AG04449 (cell line): ENCODE measurements at regions of chr12 and their contacts with region 1.

Region 1: GRCh38 chr12:26884765-26885576 is 52.0 kb upstream of the ITPR2 start:
- DNase-seq: peak; percentile 4
- H3K4me3 ChIP-seq: no peak overlapping the region
- CTCF ChIP-seq: peak; percentile 94

Region 2: DNA sequence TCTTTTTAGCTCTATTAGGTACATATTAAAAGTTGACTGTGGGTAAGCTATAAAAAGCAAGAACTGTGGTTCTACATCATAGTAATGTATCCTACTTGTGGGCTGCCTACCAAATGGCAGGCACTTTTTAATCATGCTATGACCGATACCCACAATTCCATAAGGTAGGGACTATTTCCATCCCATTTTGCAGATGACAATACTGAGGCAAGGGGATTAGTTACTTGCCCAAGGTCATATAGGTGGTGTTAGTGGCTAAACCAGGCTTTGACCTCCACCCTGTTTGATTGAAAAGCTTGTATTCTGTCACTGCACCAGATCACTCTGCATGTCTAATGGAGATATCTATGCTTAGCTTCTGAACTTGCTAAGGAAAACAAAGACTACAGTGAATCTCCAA is 537.7 kb before region 1 on chr12:
- CTCF ChIA-PET with region 1: no interaction called
- POLR2A ChIA-PET with region 1: no interaction called
- DNase-seq: no peak
- H3K4me3 ChIP-seq: no peak overlapping the region
- CTCF ChIP-seq: no peak

Region 3: GRCh38 chr12:26845057-26845666 is 39.8 kb before region 1 on chr12:
- CTCF ChIA-PET with region 1: interaction called, 54 read pairs
- POLR2A ChIA-PET with region 1: no interaction called
- DNase-seq: no peak
- H3K4me3 ChIP-seq: no peak overlapping the region
- CTCF ChIP-seq: peak; percentile 62

Region 4: DNA sequence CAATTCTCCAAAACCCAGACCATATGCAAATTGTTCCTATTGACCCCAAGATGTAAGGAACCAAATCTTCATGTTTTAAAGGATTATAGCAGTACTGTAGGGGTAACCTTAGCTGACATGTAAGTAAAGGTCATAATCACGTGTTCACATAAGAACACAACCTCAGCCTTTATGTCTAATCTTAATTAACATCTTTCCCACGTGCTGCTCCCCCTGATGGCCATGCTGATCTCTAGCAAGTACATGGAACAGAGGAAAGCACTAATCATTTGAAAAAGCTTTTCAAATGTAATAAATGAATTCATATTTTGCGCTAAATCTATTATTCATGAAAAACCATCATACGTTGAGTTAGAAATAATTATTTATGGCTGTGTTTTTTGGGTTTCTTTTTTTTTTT is 21.5 kb before region 1 on chr12:
- CTCF ChIA-PET with region 1: interaction called, 51 read pairs
- POLR2A ChIA-PET with region 1: no interaction called
- DNase-seq: no peak
- H3K4me3 ChIP-seq: no peak overlapping the region
- CTCF ChIP-seq: peak; percentile 6

Region 5: GRCh38 chr12:26896913-26897312 is 11.9 kb after region 1 on chr12:
- CTCF ChIA-PET with region 1: interaction called, 78 read pairs
- POLR2A ChIA-PET with region 1: no interaction called
- DNase-seq: no peak
- H3K4me3 ChIP-seq: no peak overlapping the region
- CTCF ChIP-seq: no peak

Region 6: DNA sequence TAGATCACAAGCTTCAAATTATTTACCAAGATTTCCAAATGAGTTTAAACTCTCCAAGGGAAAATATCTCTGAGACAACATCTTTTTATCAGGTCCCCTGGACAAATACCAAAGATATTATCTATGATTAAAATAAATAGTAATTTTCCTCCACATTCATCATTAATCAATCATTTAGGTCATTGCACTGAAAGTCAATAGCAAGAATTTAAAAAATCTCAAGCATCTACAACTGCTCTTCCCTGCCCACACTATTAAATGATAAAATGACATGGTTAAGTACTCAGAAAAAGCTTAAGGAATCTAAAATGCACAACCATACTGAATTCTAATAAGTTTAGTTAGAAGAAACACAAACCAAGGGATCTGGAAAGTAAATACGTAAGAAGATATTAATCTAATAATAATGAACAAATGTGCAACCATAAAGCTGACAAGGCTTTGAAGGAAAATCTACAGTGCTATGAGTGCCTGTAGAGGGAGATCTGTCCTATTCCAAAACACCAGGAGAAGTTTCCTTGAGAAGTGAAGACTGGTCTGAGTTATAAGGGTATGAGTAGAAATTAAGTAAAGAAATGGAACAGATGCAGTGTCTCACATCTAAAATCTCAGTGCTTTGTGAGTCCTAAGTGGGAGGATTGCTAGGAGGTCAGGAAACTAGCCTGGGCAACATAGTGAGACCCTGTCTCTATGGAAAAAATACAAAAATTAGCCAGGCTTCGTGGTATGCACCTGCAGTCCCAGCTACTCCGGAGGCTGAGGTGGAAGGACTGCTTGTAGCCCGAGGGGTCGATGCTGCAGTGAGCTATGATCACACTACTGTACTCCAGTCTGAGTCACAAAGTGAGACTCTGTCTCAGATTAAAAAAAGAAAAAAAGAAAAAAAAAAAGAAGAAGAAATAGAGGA is 33.6 kb after region 1 on chr12:
- CTCF ChIA-PET with region 1: interaction called, 10 read pairs
- POLR2A ChIA-PET with region 1: no interaction called
- DNase-seq: no peak
- H3K4me3 ChIP-seq: no peak overlapping the region
- CTCF ChIP-seq: no peak

Region 7: GRCh38 chr12:28699029-28699428 is 1814.1 kb after region 1 on chr12:
- CTCF ChIA-PET with region 1: no interaction called
- POLR2A ChIA-PET with region 1: no interaction called
- DNase-seq: no peak
- H3K4me3 ChIP-seq: no peak overlapping the region
- CTCF ChIP-seq: no peak